A673 (cell line): ENCODE measurements at regions of chr5 and their contacts with region 1.

Region 1: GRCh38 chr5:87069974-87070624 is 197.6 kb upstream of the RASA1 start:
- DNase-seq: peak; percentile 65
- H3K4me3 ChIP-seq: no peak overlapping the region
- H3K27ac ChIP-seq: no peak overlapping the region
- H3K4me1 ChIP-seq: no peaks in the 10 kb centered on the region
- H3K27me3 ChIP-seq: no peaks in the 10 kb centered on the region
- CTCF ChIP-seq: peak; percentile 52

Region 2: GRCh38 chr5:87267574-87268125 is 197.6 kb after region 1 on chr5 and contains the start of gene RASA1:
- CTCF ChIA-PET with region 1: no interaction called
- POLR2A ChIA-PET with region 1: no interaction called
- intact Hi-C with region 1: loop called (anchors 10 kb)
- DNase-seq: peak; percentile 96
- H3K4me3 ChIP-seq: peak within 1 kb of the TSS; percentile 97
- H3K27ac ChIP-seq: peak within 1 kb of the TSS; percentile 86
- H3K4me1 ChIP-seq: no peaks in the 10 kb centered on the region
- H3K27me3 ChIP-seq: no peaks in the 10 kb centered on the region
- CTCF ChIP-seq: no peak
- total RNA-seq, gene RASA1: 34.2 and 35.4 TPM in 2 replicates

Region 3: GRCh38 chr5:87327998-87328397 is 257.9 kb after region 1 on chr5:
- CTCF ChIA-PET with region 1: no interaction called
- POLR2A ChIA-PET with region 1: interaction called, 10 read pairs
- intact Hi-C with region 1: no loop called
- DNase-seq: no peak
- H3K4me3 ChIP-seq: no peak overlapping the region
- H3K27ac ChIP-seq: no peak overlapping the region
- H3K4me1 ChIP-seq: peaks cover 13% of the 10 kb centered on the region
- H3K27me3 ChIP-seq: no peaks in the 10 kb centered on the region
- CTCF ChIP-seq: no peak

Region 4: DNA sequence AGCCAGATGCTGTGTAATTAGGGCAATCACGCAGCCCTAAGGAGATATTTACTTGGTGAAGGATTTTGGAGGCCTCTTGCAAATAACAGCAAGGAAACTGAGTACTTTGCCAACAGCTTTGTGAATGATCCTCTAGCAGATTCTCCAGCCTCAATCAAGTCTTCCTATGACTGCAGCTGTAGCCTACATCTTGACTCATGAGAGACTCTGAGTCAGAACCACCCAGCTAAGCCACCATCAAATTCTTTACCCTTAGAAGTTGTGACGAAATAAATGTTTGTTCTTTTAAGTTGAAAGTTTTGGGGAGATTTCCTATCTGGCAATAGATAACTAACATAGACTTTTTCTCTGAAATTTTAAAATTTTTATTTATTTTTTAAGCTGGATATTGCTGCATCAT is 580.2 kb after region 1 on chr5:
- CTCF ChIA-PET with region 1: no interaction called
- POLR2A ChIA-PET with region 1: no interaction called
- intact Hi-C with region 1: no loop called
- DNase-seq: no peak
- H3K4me3 ChIP-seq: no peak overlapping the region
- H3K27ac ChIP-seq: no peak overlapping the region
- H3K4me1 ChIP-seq: no peaks in the 10 kb centered on the region
- H3K27me3 ChIP-seq: no peaks in the 10 kb centered on the region
- CTCF ChIP-seq: no peak